ENCODE measurements at regions of chr7 and their contacts with region 1.

Region 1: GRCh38 chr7:158818325-158819213 is 10.7 kb downstream of the ESYT2 start:
- DNase-seq: peak; percentile 95
- ATAC-seq: peak; percentile 75
- H3K4me3 ChIP-seq: peak overlapping the region; percentile 38 to 51
- H3K27ac ChIP-seq: peak overlapping the region; percentile 92
- H3K4me1 ChIP-seq: peaks cover 58 to 93% of the 10 kb centered on the region in 2 experiments
- H3K27me3 ChIP-seq: no peaks in the 10 kb centered on the region
- CTCF ChIP-seq: no peak
- POLR2A ChIP-seq: no peak
- RAD21 ChIP-seq: peak; percentile 52

Region 2: DNA sequence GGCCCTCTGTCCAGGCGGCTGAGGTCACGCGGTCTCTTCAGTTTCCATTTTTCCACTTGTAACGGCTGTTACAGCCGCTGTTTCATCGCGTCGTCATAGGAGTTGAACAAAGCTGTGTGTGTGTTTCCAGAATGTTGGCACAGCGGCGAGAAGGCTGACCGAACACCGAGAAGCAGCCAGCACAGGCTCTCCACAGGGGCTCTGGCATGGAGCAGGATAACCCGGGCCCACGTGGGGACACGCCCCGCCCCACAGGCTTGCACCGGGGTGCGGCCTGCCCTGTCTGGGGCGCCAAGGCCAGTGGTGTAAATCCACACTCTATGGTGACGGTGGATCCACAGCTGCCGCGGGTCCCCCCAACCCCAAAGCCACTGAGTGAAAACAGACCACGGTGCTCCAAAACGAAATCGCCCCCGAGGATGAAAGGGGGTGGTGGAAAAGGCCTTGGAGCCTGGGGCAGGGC is 1033.6 kb before region 1 on chr7:
- CTCF ChIA-PET with region 1: no interaction called
- POLR2A ChIA-PET with region 1: no interaction called
- RAD21 ChIA-PET with region 1: no interaction called
- intact Hi-C with region 1: no loop called
- DNase-seq: no peak
- ATAC-seq: no peak
- H3K4me3 ChIP-seq: no peak overlapping the region
- H3K27ac ChIP-seq: no peak overlapping the region
- H3K4me1 ChIP-seq: no peaks in the 10 kb centered on the region
- H3K27me3 ChIP-seq: no peaks in the 10 kb centered on the region
- CTCF ChIP-seq: no peak
- POLR2A ChIP-seq: no peak
- RAD21 ChIP-seq: no peak

Region 3: DNA sequence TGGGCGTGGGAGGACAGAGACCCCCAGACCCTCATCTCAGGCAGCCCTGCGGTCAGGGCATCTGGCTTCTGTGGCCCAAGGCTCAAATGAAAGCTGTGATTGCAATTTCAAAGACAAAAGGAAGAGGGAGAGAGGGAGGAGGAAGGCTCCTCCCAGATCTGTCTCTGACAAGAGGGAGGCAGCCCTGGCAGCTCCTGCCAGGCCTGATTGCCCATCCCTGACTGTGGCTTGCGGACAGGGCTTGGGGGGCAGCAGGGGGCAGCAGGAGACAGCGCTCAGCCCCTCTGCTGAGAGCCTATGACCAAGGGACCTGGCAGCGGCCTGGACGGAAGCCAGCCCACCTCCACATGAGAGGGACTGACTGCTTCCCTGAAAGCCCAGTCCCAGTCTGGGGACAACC is 322.8 kb before region 1 on chr7:
- CTCF ChIA-PET with region 1: no interaction called
- POLR2A ChIA-PET with region 1: no interaction called
- RAD21 ChIA-PET with region 1: no interaction called
- intact Hi-C with region 1: no loop called
- DNase-seq: peak; percentile 8
- ATAC-seq: peak; percentile 87
- H3K4me3 ChIP-seq: no peak overlapping the region
- H3K27ac ChIP-seq: no peak overlapping the region
- H3K4me1 ChIP-seq: peaks cover 0 to 5% of the 10 kb centered on the region in 2 experiments; a peak in 1 of 4 replicates
- H3K27me3 ChIP-seq: no peaks in the 10 kb centered on the region
- CTCF ChIP-seq: peak; percentile 18 to 31 (median 21); a peak in 3 of 6 replicates
- POLR2A ChIP-seq: no peak
- RAD21 ChIP-seq: peak; percentile 73

Region 4: GRCh38 chr7:158856883-158857668 is 38.5 kb after region 1 on chr7:
- CTCF ChIA-PET with region 1: no interaction called
- POLR2A ChIA-PET with region 1: no interaction called
- RAD21 ChIA-PET with region 1: no interaction called
- intact Hi-C with region 1: loop called (anchors 1 kb)
- DNase-seq: no peak
- ATAC-seq: peak; percentile 48
- H3K4me3 ChIP-seq: peak overlapping the region; percentile 75 to 79
- H3K27ac ChIP-seq: peak overlapping the region; percentile 80
- H3K4me1 ChIP-seq: peaks cover 18 to 28% of the 10 kb centered on the region in 2 experiments
- H3K27me3 ChIP-seq: no peaks in the 10 kb centered on the region
- CTCF ChIP-seq: no peak
- POLR2A ChIP-seq: no peak
- RAD21 ChIP-seq: no peak

Region 5: GRCh38 chr7:159117366-159118196 is 299.0 kb after region 1 on chr7:
- CTCF ChIA-PET with region 1: no interaction called
- POLR2A ChIA-PET with region 1: no interaction called
- RAD21 ChIA-PET with region 1: no interaction called
- intact Hi-C with region 1: no loop called
- DNase-seq: no peak
- ATAC-seq: no peak
- H3K4me3 ChIP-seq: no peak overlapping the region
- H3K27ac ChIP-seq: no peak overlapping the region
- H3K4me1 ChIP-seq: no peaks in the 10 kb centered on the region
- H3K27me3 ChIP-seq: peaks cover 28% of the 10 kb centered on the region
- CTCF ChIP-seq: no peak
- POLR2A ChIP-seq: no peak
- RAD21 ChIP-seq: no peak